ENCODE measurements at regions of chr14 and their contacts with region 1.

Region 1: DNA sequence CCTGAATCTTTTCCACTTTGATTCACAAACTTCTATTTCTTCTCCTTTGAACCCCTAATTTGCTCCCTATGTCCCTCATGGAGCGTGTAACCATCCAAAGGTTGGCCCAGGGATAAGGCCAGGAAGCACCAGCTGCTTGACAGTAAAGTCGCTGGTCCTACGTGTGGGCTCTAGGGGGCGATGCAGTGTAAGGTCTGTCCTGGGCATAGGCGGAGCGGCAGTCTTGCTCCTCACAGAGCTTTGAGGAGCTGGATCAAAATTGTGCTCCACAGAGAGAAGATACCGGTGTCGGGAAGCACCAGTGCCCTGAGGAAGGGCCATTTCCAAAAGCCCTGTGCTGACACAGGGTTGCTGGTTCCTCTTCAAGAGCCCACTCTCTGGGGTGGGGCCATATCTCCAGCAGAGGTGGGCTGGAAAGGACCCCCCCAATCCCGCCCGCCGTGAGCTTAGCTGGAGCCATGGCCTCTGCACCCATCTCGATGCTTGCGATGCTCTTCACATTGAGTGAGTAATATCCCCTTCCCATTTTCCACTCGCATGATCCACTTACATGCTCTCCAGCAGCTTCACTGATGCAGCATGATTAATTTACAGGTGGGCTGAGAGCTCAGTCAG is 49.9 kb upstream of the OR4E1 start:
- DNase-seq: peak; percentile 32
- ATAC-seq: peak; percentile 99
- H3K4me3 ChIP-seq: no peak overlapping the region
- H3K27ac ChIP-seq: no peak overlapping the region
- H3K4me1 ChIP-seq: no peaks in the 10 kb centered on the region
- H3K27me3 ChIP-seq: peaks cover 36% of the 10 kb centered on the region
- CTCF ChIP-seq: peak in 2 of 3 experiments; percentile 73 to 86; a peak in 4 of 6 replicates
- POLR2A ChIP-seq: no peak
- RAD21 ChIP-seq: 0 out of 2 replicates have a peak, but pooled peaks have one; percentile 24

Region 2: DNA sequence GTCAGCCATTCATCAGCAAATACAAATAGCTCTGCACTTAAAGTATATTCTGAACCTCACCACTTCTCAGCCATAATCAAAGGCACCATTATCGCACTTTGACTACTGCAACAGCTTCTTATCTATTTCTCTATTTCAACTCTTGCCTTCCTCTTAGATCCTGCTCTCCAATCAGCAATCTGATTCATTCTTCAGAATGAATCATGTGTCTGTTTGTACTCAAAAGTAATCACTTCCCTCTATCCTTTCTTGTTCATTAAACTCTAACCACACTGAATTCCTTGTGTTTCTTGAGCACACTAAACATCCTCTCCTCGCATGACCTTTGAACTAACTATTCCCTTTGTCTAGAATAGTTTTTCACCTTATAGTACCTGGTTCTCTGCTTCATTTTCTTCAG is 37.1 kb before region 1 on chr14:
- CTCF ChIA-PET with region 1: no interaction called
- POLR2A ChIA-PET with region 1: no interaction called
- RAD21 ChIA-PET with region 1: no interaction called
- intact Hi-C with region 1: no loop called
- DNase-seq: no peak
- ATAC-seq: no peak
- H3K4me3 ChIP-seq: no peak overlapping the region
- H3K27ac ChIP-seq: no peak overlapping the region
- H3K4me1 ChIP-seq: no peaks in the 10 kb centered on the region
- H3K27me3 ChIP-seq: peaks cover 47% of the 10 kb centered on the region
- CTCF ChIP-seq: no peak
- POLR2A ChIP-seq: no peak
- RAD21 ChIP-seq: no peak

Region 3: DNA sequence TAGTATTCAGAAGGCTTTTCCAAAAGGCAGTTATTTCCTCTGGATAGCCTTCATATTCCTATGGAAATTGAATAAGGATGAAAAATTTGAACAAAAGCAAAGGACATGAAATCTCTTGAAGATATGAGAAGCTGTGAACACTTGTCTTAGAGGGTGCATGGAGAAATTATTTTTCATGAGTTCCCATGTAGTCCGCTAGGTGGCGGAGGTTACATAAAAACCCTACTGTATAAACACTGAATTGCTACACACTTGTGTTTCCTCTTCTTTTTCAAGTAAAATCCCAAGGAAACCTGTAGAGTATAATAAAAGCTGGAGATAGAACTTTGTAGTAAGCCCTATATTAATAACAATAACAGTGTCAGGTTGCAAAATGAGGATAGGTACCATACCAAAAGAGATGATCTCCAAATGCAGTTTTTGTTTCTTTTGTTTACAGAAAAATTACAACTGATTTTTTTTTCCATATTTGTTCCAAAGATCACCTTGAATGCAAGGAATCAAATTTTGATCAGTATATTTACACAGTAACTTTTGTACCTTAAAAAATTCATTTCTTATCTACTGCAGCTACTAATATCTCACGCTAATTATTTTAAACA is 12.1 kb before region 1 on chr14:
- CTCF ChIA-PET with region 1: interaction called, 36 read pairs
- POLR2A ChIA-PET with region 1: no interaction called
- RAD21 ChIA-PET with region 1: no interaction called
- intact Hi-C with region 1: no loop called
- DNase-seq: peak; percentile 26
- ATAC-seq: peak; percentile 72
- H3K4me3 ChIP-seq: no peak overlapping the region
- H3K27ac ChIP-seq: no peak overlapping the region
- H3K4me1 ChIP-seq: no peaks in the 10 kb centered on the region
- H3K27me3 ChIP-seq: peaks cover 20% of the 10 kb centered on the region; the same call in 1 of the 2 replicates
- CTCF ChIP-seq: peak; percentile 14 to 84 (median 72); a peak in 5 of 6 replicates
- POLR2A ChIP-seq: no peak
- RAD21 ChIP-seq: peak; percentile 16; the same call in 1 of the 2 replicates

Measured in HCT116 (cell line).